ENCODE measurements at regions of chr19 and their contacts with region 1.

Region 1: GRCh38 chr19:32595491-32595890 is 14.5 kb downstream of the PDCD5 start:
- DNase-seq: no peak
- ATAC-seq: no peak
- H3K4me3 ChIP-seq: no peak overlapping the region
- H3K4me3 Mint-ChIP-seq: no peak overlapping the region
- H3K27ac ChIP-seq: no peak overlapping the region
- H3K27ac Mint-ChIP-seq: no peak overlapping the region
- H3K4me1 ChIP-seq: no peaks in the 10 kb centered on the region
- H3K4me1 Mint-ChIP-seq: peaks cover 6 to 11% (median 6%) of the 10 kb centered on the region in 3 donors
- H3K27me3 ChIP-seq: no peaks in the 10 kb centered on the region
- H3K27me3 Mint-ChIP-seq: no peaks in the 10 kb centered on the region

Region 2: DNA sequence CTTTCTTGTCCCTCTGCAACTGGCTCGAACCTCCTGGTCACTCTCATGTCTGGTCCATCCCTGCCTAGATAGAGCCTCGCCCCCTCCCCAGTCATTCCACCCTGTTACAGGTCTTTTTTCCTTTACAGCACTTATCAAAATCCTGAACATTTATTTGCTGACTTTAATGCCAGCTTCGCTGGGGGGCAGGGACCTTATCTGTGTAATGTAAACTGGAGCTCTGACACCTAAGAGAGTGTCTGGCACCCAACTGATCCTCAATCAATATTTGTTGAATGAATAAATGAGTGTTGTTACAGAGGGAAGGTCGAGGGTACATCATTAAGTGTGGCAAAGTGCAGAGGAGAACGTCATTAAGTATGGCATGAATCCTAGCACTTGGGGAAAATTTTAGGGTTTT is 393.2 kb after region 1 on chr19:
- CTCF ChIA-PET with region 1: interaction called in 1 of 2 experiments, 12 read pairs
- POLR2A ChIA-PET with region 1: no interaction called
- DNase-seq: no peak
- ATAC-seq: no peak
- H3K4me3 ChIP-seq: no peak overlapping the region
- H3K4me3 Mint-ChIP-seq: no peak overlapping the region
- H3K27ac ChIP-seq: no peak overlapping the region
- H3K27ac Mint-ChIP-seq: no peak overlapping the region
- H3K4me1 ChIP-seq: no peaks in the 10 kb centered on the region
- H3K4me1 Mint-ChIP-seq: peaks cover 1 to 7% (median 5%) of the 10 kb centered on the region in 3 donors
- H3K27me3 ChIP-seq: no peaks in the 10 kb centered on the region
- H3K27me3 Mint-ChIP-seq: no peaks in the 10 kb centered on the region